CD4-positive, alpha-beta T cell (primary cell): ENCODE measurements at regions of chr1 and their contacts with region 1.

Region 1: GRCh38 chr1:169893494-169894362 is at the start of gene SCYL3:
- DNase-seq: peak; percentile 78 to 97 (median 86)
- ATAC-seq: peak; percentile 82
- H3K4me3 ChIP-seq: peak within 1 kb of the TSS; percentile 79
- H3K4me3 Mint-ChIP-seq: peak within 1 kb of the TSS; percentile 97
- H3K27ac ChIP-seq: peak within 1 kb of the TSS; percentile 98 to 100
- H3K27ac Mint-ChIP-seq: peak within 1 kb of the TSS; percentile 99
- H3K4me1 ChIP-seq: peaks cover 23% of the 10 kb centered on the region
- H3K4me1 Mint-ChIP-seq: peaks cover 53% of the 10 kb centered on the region
- H3K27me3 ChIP-seq: no peaks in the 10 kb centered on the region
- H3K27me3 Mint-ChIP-seq: no peaks in the 10 kb centered on the region
- CTCF ChIP-seq: no peak
- total RNA-seq, gene SCYL3: 3.5 to 3.6 TPM

Region 2: GRCh38 chr1:169367486-169368405 is 526.0 kb before region 1 on chr1 and contains the starts of genes BLZF1 and NME7:
- CTCF ChIA-PET with region 1: no interaction called
- POLR2A ChIA-PET with region 1: interaction called, 17 read pairs
- intact Hi-C with region 1: loop called (anchors 5 kb)
- DNase-seq: peak; percentile 95 to 99 (median 98)
- ATAC-seq: peak; percentile 95
- H3K4me3 ChIP-seq: peak within 1 kb of the TSS; percentile 65
- H3K4me3 Mint-ChIP-seq: no peak within 1 kb of the TSS
- H3K27ac ChIP-seq: peak within 1 kb of the TSS; percentile 89 to 94
- H3K27ac Mint-ChIP-seq: no peak within 1 kb of the TSS
- H3K4me1 ChIP-seq: peaks cover 8% of the 10 kb centered on the region
- H3K4me1 Mint-ChIP-seq: peaks cover 33% of the 10 kb centered on the region
- H3K27me3 ChIP-seq: no peaks in the 10 kb centered on the region
- H3K27me3 Mint-ChIP-seq: no peaks in the 10 kb centered on the region
- CTCF ChIP-seq: no peak
- total RNA-seq, gene BLZF1: 10.0 to 10.6 TPM
- total RNA-seq, gene NME7: 7.2 to 8.3 TPM

Region 3: GRCh38 chr1:169694304-169695075 is 199.2 kb before region 1 on chr1:
- CTCF ChIA-PET with region 1: no interaction called
- POLR2A ChIA-PET with region 1: interaction called, 7 read pairs
- intact Hi-C with region 1: loop called in 1 of 2 experiments (anchors 5 kb)
- DNase-seq: peak in 10 of 14 experiments; percentile 13 to 90 (median 49)
- ATAC-seq: peak; percentile 59
- H3K4me3 ChIP-seq: peak overlapping the region; percentile 4
- H3K4me3 Mint-ChIP-seq: peak overlapping the region; percentile 68
- H3K27ac ChIP-seq: peak overlapping the region; percentile 55 to 64
- H3K27ac Mint-ChIP-seq: no peak overlapping the region
- H3K4me1 ChIP-seq: peaks cover 83% of the 10 kb centered on the region
- H3K4me1 Mint-ChIP-seq: peaks cover 73% of the 10 kb centered on the region
- H3K27me3 ChIP-seq: no peaks in the 10 kb centered on the region
- H3K27me3 Mint-ChIP-seq: no peaks in the 10 kb centered on the region
- CTCF ChIP-seq: peak; percentile 70

Region 4: GRCh38 chr1:169872906-169873305 is 20.8 kb before region 1 on chr1:
- CTCF ChIA-PET with region 1: no interaction called
- POLR2A ChIA-PET with region 1: no interaction called
- intact Hi-C with region 1: no loop called
- DNase-seq: no peak
- ATAC-seq: no peak
- H3K4me3 ChIP-seq: no peak overlapping the region
- H3K4me3 Mint-ChIP-seq: no peak overlapping the region
- H3K27ac ChIP-seq: no peak overlapping the region
- H3K27ac Mint-ChIP-seq: peak overlapping the region; percentile 56
- H3K4me1 ChIP-seq: no peaks in the 10 kb centered on the region
- H3K4me1 Mint-ChIP-seq: peaks cover 22% of the 10 kb centered on the region
- H3K27me3 ChIP-seq: no peaks in the 10 kb centered on the region
- H3K27me3 Mint-ChIP-seq: no peaks in the 10 kb centered on the region
- CTCF ChIP-seq: no peak

Region 5: DNA sequence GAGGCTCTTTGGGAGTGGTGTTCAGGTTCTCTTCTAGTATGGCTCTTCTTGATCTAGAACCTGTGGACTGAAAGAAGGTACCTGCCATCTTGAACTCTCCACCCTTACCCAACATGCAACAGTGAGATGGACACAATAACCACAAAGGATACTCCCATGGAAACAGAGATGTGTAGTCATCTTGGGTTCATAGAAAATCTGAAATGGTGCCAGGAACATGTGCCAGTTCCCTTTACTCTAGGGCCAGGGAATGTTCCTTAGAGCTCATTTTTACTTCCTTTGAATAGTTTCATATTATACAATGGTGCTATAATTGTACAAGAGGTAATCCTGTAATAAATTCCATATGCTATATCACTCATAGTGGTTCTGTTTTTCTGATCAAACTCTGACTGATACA is 13.2 kb after region 1 on chr1:
- CTCF ChIA-PET with region 1: interaction called, 4 read pairs
- POLR2A ChIA-PET with region 1: interaction called, 43 read pairs
- intact Hi-C with region 1: no loop called
- DNase-seq: no peak
- ATAC-seq: no peak
- H3K4me3 ChIP-seq: no peak overlapping the region
- H3K4me3 Mint-ChIP-seq: no peak overlapping the region
- H3K27ac ChIP-seq: no peak overlapping the region
- H3K27ac Mint-ChIP-seq: no peak overlapping the region
- H3K4me1 ChIP-seq: peaks cover 23% of the 10 kb centered on the region
- H3K4me1 Mint-ChIP-seq: peaks cover 38% of the 10 kb centered on the region
- H3K27me3 ChIP-seq: no peaks in the 10 kb centered on the region
- H3K27me3 Mint-ChIP-seq: no peaks in the 10 kb centered on the region
- CTCF ChIP-seq: no peak

Region 6: DNA sequence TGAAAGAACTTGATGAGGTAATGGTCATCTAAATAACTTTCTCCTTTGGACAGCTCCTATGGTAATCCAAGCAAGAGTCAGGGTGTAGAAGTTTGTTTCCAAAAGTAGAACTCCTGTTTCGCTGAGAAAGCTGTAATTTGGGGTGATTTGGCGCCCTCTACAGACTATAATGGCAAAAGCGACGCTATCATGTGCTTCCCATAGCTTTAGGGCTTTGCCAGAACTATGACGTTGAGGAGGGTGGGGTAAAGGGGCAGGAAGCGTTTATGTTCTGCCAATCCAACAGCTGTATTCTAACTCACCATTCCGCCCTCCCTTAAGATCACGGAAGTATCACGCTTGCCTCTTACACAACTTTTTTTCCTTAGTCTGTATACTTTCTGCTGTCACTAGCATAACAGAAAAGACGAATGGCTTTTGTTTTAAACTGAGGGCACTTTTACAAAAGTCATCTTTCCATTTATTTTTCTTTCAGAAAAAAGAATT is 1420.2 kb after region 1 on chr1 and contains the start of gene FMO4:
- CTCF ChIA-PET with region 1: interaction called, 6 read pairs
- POLR2A ChIA-PET with region 1: interaction called, 5 read pairs
- intact Hi-C with region 1: loop called in 1 of 2 experiments (anchors 10 kb)
- DNase-seq: peak; percentile 57 to 97 (median 70)
- ATAC-seq: peak; percentile 100
- H3K4me3 ChIP-seq: peak within 1 kb of the TSS; percentile 41
- H3K4me3 Mint-ChIP-seq: peak within 1 kb of the TSS; percentile 66
- H3K27ac ChIP-seq: peak within 1 kb of the TSS in 1 of 2 donors; percentile 41
- H3K27ac Mint-ChIP-seq: peak within 1 kb of the TSS; percentile 81
- H3K4me1 ChIP-seq: no peaks in the 10 kb centered on the region
- H3K4me1 Mint-ChIP-seq: peaks cover 17% of the 10 kb centered on the region
- H3K27me3 ChIP-seq: no peaks in the 10 kb centered on the region
- H3K27me3 Mint-ChIP-seq: no peaks in the 10 kb centered on the region
- CTCF ChIP-seq: peak; percentile 78
- total RNA-seq, gene FMO4: 0.70 to 1.1 TPM